ENCODE measurements at regions of chr7 and their contacts with region 1.

Region 1: DNA sequence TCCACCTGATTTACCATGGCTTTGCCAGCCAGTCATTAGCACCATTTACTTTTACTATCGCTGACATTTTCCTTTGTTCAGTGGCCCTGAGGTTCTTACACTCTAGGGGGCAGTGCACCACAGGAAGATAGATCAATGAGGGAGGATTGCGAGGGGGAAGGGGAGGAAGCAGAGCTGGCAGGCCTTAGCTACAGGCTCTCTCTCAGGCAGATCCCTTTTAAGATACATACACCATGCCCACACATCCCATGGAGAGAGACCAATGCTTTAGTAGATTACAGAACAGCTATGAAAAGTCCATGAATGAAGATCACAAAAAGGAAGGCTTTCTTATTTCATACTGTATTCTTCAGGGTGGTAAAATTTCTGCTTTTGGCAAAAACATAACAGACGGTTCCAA is 47.4 kb downstream of the DENND11 start:
- DNase-seq: peak; percentile 56 to 69
- H3K4me3 ChIP-seq: no peak overlapping the region
- H3K27ac ChIP-seq: no peak overlapping the region
- H3K4me1 ChIP-seq: peaks cover 6% of the 10 kb centered on the region
- H3K27me3 ChIP-seq: no peaks in the 10 kb centered on the region
- CTCF ChIP-seq: peak; percentile 79

Region 2: DNA sequence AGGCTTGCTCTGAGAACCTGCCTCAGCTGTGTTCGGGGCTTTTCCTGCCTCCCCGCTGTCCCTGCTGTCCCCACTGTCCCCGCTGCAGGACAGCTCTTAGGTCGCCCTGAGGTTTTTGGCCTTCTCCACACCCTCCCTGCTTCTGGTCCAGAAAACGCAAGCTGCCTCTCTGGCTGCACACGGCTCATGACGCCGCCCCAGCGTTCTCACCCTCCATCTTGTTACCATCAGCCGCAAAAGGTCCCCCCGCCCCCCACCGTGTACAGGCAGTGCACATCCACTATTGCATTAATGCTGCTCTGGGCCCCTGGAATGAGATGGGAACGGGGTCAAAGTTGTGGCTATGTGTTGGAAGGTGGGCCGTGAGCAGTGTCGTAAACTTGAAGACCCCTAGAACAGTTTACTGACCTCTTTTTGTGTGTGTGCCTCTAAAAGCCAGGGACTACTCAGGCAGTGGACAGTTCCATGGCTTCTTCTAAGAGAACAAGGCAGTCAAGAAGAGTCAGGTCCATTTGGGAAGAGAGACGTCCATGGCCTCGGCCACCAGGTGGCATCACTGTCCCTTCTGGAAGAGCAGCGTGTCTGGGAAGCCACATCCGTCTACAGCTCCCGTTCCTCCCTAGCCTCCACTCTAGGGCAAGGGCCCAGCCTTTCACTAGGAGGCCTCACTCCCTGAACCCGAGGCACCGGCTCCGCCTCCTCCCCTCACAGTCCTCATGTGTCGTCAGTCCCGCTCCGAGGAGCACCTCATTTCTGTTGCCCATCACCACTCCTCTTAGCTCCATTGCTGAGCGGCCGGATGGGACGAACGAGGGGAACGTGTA is 1136.8 kb before region 1 on chr7:
- CTCF ChIA-PET with region 1: no interaction called
- POLR2A ChIA-PET with region 1: no interaction called
- intact Hi-C with region 1: loop called (anchors 5 kb)
- DNase-seq: peak; percentile 78 to 92
- H3K4me3 ChIP-seq: no peak overlapping the region
- H3K27ac ChIP-seq: no peak overlapping the region
- H3K4me1 ChIP-seq: peaks cover 11% of the 10 kb centered on the region
- H3K27me3 ChIP-seq: no peaks in the 10 kb centered on the region
- CTCF ChIP-seq: peak; percentile 96

Region 3: DNA sequence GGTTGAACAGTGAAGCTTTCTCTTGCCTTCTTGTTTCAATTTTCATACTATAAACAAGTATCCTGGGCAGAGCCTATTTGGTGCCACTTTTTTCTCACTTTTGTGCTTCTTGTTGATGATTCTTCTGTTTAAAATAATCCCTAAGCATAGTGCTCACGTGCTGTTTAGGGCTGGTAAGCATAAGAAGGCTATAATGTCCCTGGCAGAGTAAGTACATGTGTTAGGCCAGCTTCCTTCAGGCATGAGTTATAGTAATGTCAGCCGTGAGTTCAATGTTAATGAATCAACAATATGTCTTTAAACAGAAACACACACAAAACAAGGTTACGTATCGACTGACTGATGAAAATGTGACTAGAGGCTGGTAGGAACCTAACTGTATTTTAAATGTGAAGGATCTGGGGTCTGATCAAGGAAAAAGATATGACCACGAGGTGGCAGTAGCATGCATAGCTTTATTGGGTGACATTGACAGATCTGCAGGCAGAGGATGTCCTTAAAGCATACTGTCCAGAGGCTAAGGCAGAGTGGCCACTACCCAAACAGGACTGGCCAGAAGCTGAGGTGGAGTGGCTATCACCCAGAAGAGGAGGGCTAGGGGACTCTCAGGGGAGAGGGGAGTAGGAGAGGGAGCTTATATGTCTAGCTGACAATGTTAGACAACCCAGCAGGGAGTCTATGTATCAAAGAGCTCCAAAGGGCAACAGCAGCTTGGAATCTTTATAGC is 843.6 kb before region 1 on chr7:
- CTCF ChIA-PET with region 1: interaction called, 5 read pairs
- POLR2A ChIA-PET with region 1: no interaction called
- intact Hi-C with region 1: loop called (anchors 5 kb)
- DNase-seq: peak; percentile 58 to 68
- H3K4me3 ChIP-seq: no peak overlapping the region
- H3K27ac ChIP-seq: no peak overlapping the region
- H3K4me1 ChIP-seq: no peaks in the 10 kb centered on the region
- H3K27me3 ChIP-seq: no peaks in the 10 kb centered on the region
- CTCF ChIP-seq: peak; percentile 91

Region 4: DNA sequence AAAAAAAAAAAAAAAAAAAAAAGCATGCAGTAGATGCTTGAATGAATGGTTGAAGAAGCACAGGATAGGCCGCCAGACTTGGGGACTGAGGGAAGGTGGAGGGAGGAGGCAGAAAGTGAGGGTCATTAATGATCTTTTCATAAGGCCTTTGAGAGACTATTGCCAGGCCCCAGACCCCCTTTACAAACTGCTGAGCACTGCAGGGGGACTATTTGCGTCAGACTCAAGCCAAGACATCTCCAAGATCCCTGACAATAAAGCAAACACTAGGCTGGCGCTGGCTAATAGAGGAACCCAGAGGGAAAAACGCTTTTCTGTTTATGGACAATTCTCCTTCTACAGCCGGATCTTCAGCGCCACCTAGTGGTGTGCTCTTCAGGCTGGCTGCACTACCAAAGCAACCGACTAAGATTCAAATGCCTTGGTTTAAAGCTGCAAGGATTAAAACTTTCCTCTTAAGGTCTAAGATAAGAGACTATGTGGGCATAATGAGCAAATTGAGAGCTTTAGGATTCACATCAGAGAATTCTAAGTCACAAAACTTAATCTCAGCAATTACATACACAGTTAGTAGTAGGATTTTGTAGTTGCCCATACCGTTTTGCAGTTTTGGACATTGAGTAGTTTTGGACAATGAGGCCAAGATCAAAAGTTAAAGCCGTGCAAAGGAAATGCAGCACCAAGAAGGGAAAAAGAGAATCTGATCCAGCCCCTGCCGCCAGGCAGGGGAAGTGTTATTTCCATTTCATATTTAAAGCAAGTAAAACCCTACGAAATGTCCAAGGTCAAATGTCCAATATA is 121.2 kb before region 1 on chr7:
- CTCF ChIA-PET with region 1: no interaction called
- POLR2A ChIA-PET with region 1: no interaction called
- intact Hi-C with region 1: loop called (anchors 1 kb)
- DNase-seq: peak; percentile 41 to 53
- H3K4me3 ChIP-seq: no peak overlapping the region
- H3K27ac ChIP-seq: no peak overlapping the region
- H3K4me1 ChIP-seq: no peaks in the 10 kb centered on the region
- H3K27me3 ChIP-seq: peaks cover 40% of the 10 kb centered on the region
- CTCF ChIP-seq: peak; percentile 96

Region 5: GRCh38 chr7:141710301-141710700 is 55.8 kb after region 1 on chr7:
- CTCF ChIA-PET with region 1: no interaction called
- POLR2A ChIA-PET with region 1: no interaction called
- intact Hi-C with region 1: no loop called
- DNase-seq: no peak
- H3K4me3 ChIP-seq: no peak overlapping the region
- H3K27ac ChIP-seq: no peak overlapping the region
- H3K4me1 ChIP-seq: no peaks in the 10 kb centered on the region
- H3K27me3 ChIP-seq: 0 out of 2 replicates have a peak, but pooled peaks cover under 1% of the 10 kb centered on the region
- CTCF ChIP-seq: no peak; the same call in 1 of the 2 replicates

Region 6: GRCh38 chr7:141737834-141738591 is 83.5 kb after region 1 on chr7 and contains the start of gene SSBP1:
- CTCF ChIA-PET with region 1: interaction called, 17 read pairs
- POLR2A ChIA-PET with region 1: interaction called, 6 read pairs
- intact Hi-C with region 1: loop called (anchors 1 kb)
- DNase-seq: peak; percentile 93 to 95
- H3K4me3 ChIP-seq: peak within 1 kb of the TSS; percentile 100
- H3K27ac ChIP-seq: peak within 1 kb of the TSS; percentile 77
- H3K4me1 ChIP-seq: peaks cover 27% of the 10 kb centered on the region
- H3K27me3 ChIP-seq: no peaks in the 10 kb centered on the region
- CTCF ChIP-seq: peak; percentile 83
- total RNA-seq, gene SSBP1: 150 and 193 TPM in 2 replicates

Region 7: GRCh38 chr7:141975806-141976523 is 321.4 kb after region 1 on chr7:
- CTCF ChIA-PET with region 1: no interaction called
- POLR2A ChIA-PET with region 1: no interaction called
- intact Hi-C with region 1: loop called (anchors 2 kb)
- DNase-seq: peak; percentile 44 to 86
- H3K4me3 ChIP-seq: no peak overlapping the region
- H3K27ac ChIP-seq: no peak overlapping the region
- H3K4me1 ChIP-seq: no peaks in the 10 kb centered on the region; the same call in 1 of the 2 replicates
- H3K27me3 ChIP-seq: no peaks in the 10 kb centered on the region
- CTCF ChIP-seq: peak; percentile 96